ENCODE measurements at regions of chr22 and their contacts with region 1.

Region 1: DNA sequence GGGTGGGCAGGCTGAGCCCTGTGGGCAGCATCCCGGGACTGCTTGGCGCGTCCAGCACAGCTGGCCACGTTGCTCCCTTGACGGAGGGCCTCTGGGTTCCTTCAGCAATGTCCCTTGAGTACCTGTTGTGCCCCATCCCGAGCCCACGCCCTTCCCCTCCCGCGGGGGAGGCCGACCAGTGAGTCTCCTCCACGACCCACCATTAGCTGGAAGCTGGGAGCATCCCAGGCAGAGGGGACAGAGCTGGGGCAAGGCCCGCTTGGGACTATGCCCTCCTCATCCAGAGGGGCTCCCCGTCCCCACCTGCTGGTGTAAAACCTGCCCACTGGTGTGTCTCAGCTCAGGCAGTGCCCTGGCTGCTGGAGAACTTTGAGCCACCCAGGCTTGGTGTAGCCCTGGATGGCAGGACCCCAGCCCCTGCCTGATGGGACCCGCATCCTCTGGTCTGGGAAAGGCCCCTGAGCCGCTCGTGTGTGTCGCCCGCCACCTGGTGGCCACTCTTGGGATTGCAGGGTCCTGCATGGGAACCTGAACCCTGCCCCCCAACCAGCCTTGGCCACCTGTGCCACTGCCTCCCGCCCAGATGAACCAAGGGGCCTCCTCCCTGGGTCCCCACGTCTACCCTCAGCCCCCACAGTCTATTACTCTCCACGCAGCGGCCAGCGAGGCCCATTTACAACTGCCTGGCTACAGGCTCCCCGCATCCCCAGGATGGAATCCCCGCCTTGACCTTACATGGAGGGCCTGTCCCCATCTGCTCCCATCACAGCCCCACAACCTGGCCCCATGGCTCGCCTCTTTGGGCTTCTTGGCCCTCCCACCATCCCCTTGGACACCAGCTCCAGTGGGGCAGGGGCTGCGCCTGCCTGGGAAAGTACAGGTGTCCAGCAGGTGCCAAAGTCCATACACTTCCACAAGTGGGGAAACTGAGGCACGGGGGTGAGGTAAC is 16.6 kb upstream of the ARHGAP8 start:
- DNase-seq: peak; percentile 85
- H3K4me3 Mint-ChIP-seq: no peak overlapping the region
- H3K27ac Mint-ChIP-seq: no peak overlapping the region
- H3K4me1 Mint-ChIP-seq: no peaks in the 10 kb centered on the region
- H3K27me3 Mint-ChIP-seq: no peaks in the 10 kb centered on the region

Region 2: GRCh38 chr22:44701824-44702478 is 33.9 kb before region 1 on chr22 and contains the start of gene PRR5:
- CTCF ChIA-PET with region 1: interaction called, 53 read pairs
- POLR2A ChIA-PET with region 1: no interaction called
- intact Hi-C with region 1: loop called (anchors 1 kb)
- DNase-seq: peak; percentile 88
- H3K4me3 Mint-ChIP-seq: peak within 1 kb of the TSS; percentile 68
- H3K27ac Mint-ChIP-seq: peak within 1 kb of the TSS; percentile 60
- H3K4me1 Mint-ChIP-seq: peaks cover 10% of the 10 kb centered on the region
- H3K27me3 Mint-ChIP-seq: no peaks in the 10 kb centered on the region
- total RNA-seq, gene PRR5: 10.3 to 11.8 TPM